ENCODE measurements at regions of chr10 and their contacts with region 1.

Region 1: DNA sequence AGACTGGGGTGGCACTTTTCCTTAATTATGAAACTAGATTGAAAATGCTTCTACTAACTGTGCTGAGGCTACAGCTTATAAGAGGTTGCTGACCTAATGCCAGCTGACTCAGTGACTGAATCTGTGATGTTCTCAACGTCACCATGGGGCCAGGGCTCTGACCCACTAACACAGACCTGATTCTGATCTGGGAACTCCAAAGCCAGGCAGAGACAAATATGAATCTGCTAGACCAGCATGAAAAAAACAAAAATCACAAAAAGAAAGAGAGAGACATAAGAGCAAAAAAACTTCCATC is 16.1 kb downstream of the USP6NL start:
- DNase-seq: no peak
- ATAC-seq: peak; percentile 4
- H3K4me3 ChIP-seq: no peak overlapping the region
- H3K27ac ChIP-seq: no peak overlapping the region; the same call in 2 of the 3 replicates
- H3K4me1 ChIP-seq: peaks cover 7 to 37% of the 10 kb centered on the region in 2 experiments; a peak in 4 of 5 replicates
- H3K27me3 ChIP-seq: no peaks in the 10 kb centered on the region
- CTCF ChIP-seq: no peak
- EP300 ChIP-seq: no peak
- POLR2A ChIP-seq: no peak
- RAD21 ChIP-seq: no peak

Region 2: GRCh38 chr10:11522821-11523245 is 72.5 kb before region 1 on chr10:
- CTCF ChIA-PET with region 1: no interaction called
- POLR2A ChIA-PET with region 1: no interaction called
- in situ Hi-C with region 1: loop called (anchors 5 kb)
- intact Hi-C with region 1: no loop called
- DNase-seq: no peak
- ATAC-seq: no peak; the same call in 2 of the 3 replicates
- H3K4me3 ChIP-seq: no peak overlapping the region
- H3K27ac ChIP-seq: no peak overlapping the region
- H3K4me1 ChIP-seq: 0 out of 5 replicates have a peak, but pooled peaks cover 0 to 2% of the 10 kb centered on the region in 2 experiments
- H3K27me3 ChIP-seq: no peaks in the 10 kb centered on the region
- CTCF ChIP-seq: no peak
- EP300 ChIP-seq: no peak
- POLR2A ChIP-seq: no peak
- RAD21 ChIP-seq: no peak

Region 3: DNA sequence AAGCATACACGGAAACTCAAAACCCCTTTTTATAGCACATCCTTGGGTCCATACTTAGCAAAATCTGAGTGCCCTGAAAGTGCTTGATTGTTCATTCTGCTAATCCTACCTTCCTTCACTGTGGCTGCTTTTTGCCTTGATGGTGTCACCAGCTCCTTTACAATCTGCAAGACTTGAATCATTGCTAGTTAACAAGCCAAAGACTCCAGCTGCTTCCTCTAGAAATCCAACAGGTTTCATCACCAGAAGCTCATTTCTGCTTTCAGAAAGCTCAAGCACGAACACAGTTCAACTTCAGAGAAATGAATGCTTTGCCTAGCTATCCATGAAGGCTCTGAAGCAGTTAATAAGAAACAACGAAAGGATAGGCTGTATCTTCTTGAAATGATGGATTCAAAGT is 21.8 kb before region 1 on chr10:
- CTCF ChIA-PET with region 1: no interaction called
- POLR2A ChIA-PET with region 1: interaction called, 10 read pairs
- in situ Hi-C with region 1: no loop called
- intact Hi-C with region 1: no loop called
- DNase-seq: no peak
- ATAC-seq: peak; percentile 45
- H3K4me3 ChIP-seq: no peak overlapping the region
- H3K27ac ChIP-seq: no peak overlapping the region
- H3K4me1 ChIP-seq: peaks cover 0 to 6% of the 10 kb centered on the region in 2 experiments; a peak in 2 of 5 replicates
- H3K27me3 ChIP-seq: no peaks in the 10 kb centered on the region
- CTCF ChIP-seq: no peak
- EP300 ChIP-seq: no peak
- POLR2A ChIP-seq: no peak
- RAD21 ChIP-seq: no peak

Measured in K562 (cell line).